Astrocyte of the cerebellum (primary cell): ENCODE measurements at regions of chr2 and their contacts with region 1.

Region 1: GRCh38 chr2:28325567-28326468 is 66.8 kb upstream of the FOSL2 start:
- DNase-seq: no peak
- H3K4me3 ChIP-seq: no peak overlapping the region
- CTCF ChIP-seq: no peak

Region 2: GRCh38 chr2:28276076-28276618 is 49.7 kb before region 1 on chr2:
- in situ Hi-C with region 1: loop called (anchors 5 kb)
- DNase-seq: peak; percentile 95
- H3K4me3 ChIP-seq: no peak overlapping the region
- CTCF ChIP-seq: no peak

Region 3: GRCh38 chr2:28393114-28393836 is 67.5 kb after region 1 on chr2:
- in situ Hi-C with region 1: no loop called
- DNase-seq: no peak
- H3K4me3 ChIP-seq: peak overlapping the region; percentile 97
- CTCF ChIP-seq: no peak